Posterior vena cava (tissue), 2 donors: ENCODE measurements at regions of chr12 and their contacts with region 1.

Region 1: GRCh38 chr12:79555028-79555930 is 135.5 kb downstream of the PAWR start:
- DNase-seq: no peak

Region 2: DNA sequence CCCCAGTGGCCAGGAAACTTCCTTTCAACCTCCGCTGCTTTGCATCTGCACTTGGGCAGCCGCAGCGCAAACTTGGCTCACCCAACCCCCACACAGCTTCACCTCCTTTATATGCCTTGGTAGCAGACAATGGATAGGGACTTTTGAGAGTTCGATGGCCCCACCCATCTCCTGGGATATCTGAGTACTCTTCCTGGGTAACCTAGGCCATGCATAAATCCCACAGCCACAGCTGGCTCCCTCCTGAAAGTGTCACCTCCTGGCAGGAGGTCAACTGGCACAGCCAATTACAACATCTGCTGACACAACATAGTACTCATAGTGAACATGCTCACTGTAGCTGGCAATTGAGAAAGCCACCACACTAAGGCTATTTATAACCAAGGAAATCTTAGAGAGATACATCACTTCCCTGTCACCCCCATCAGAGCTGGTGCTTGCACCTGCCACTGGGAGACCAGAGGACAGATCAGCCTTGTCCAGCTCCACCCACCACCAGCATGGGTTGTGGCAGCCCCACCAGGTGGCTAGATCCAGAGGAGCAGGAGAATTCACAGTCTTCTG is 280.7 kb before region 1 on chr12:
- intact Hi-C with region 1: no loop called
- DNase-seq: no peak

Region 3: GRCh38 chr12:79514730-79515529 is 40.3 kb before region 1 on chr12:
- intact Hi-C with region 1: no loop called
- DNase-seq: no peak

Region 4: GRCh38 chr12:79690638-79691493 is 135.6 kb after region 1 on chr12 and contains the start of gene PAWR:
- intact Hi-C with region 1: loop called (anchors 5 to 10 kb)
- DNase-seq: peak; percentile 86
- total RNA-seq, gene PAWR: 148 to 218 TPM